ENCODE measurements at regions of chr5 and their contacts with region 1.

Region 1: GRCh38 chr5:129771058-129771838 is 23.4 kb downstream of the MINAR2 start:
- DNase-seq: peak; percentile 28
- CTCF ChIP-seq: peak; percentile 70

Region 2: DNA sequence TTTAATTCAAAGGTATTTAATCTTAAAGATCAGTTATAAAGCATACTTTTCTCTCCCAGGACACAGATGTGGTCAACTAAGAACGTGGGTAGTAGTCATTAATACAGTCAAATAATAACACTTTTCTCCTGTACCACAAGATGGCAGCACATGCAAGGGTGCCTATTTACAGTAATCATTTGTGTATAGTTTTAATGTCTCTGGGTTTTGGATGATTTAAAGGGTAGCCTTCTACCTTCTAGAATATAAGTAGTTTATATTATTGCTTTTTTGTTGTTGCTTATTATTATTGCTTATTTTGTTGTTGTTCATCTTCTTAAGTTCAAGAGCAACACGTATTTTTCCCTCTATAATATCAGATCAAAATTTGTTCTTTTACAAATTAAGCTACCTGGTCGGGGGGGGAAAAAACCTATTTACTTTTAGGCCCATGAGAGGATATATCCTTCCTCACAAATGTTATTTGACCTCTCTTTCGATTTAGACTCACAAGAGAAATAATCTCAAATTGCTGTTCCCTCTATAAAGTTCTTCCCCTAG is 865.6 kb before region 1 on chr5:
- CTCF ChIA-PET with region 1: interaction called, 13 read pairs
- POLR2A ChIA-PET with region 1: no interaction called
- DNase-seq: peak; percentile 33
- CTCF ChIP-seq: peak; percentile 75

Region 3: GRCh38 chr5:129664337-129664937 is 106.8 kb before region 1 on chr5:
- CTCF ChIA-PET with region 1: interaction called, 10 read pairs
- POLR2A ChIA-PET with region 1: no interaction called
- DNase-seq: peak; percentile 18
- CTCF ChIP-seq: peak; percentile 67

Region 4: GRCh38 chr5:129760636-129761505 is 10.4 kb before region 1 on chr5:
- CTCF ChIA-PET with region 1: interaction called, 20 read pairs
- POLR2A ChIA-PET with region 1: no interaction called
- DNase-seq: no peak
- CTCF ChIP-seq: no peak

Region 5: GRCh38 chr5:129781594-129781993 is 10.3 kb after region 1 on chr5:
- CTCF ChIA-PET with region 1: interaction called, 10 read pairs
- POLR2A ChIA-PET with region 1: no interaction called
- DNase-seq: no peak
- CTCF ChIP-seq: no peak

Region 6: GRCh38 chr5:129844764-129845163 is 73.5 kb after region 1 on chr5:
- CTCF ChIA-PET with region 1: interaction called, 118 read pairs
- POLR2A ChIA-PET with region 1: no interaction called
- DNase-seq: no peak
- CTCF ChIP-seq: no peak

Region 7: DNA sequence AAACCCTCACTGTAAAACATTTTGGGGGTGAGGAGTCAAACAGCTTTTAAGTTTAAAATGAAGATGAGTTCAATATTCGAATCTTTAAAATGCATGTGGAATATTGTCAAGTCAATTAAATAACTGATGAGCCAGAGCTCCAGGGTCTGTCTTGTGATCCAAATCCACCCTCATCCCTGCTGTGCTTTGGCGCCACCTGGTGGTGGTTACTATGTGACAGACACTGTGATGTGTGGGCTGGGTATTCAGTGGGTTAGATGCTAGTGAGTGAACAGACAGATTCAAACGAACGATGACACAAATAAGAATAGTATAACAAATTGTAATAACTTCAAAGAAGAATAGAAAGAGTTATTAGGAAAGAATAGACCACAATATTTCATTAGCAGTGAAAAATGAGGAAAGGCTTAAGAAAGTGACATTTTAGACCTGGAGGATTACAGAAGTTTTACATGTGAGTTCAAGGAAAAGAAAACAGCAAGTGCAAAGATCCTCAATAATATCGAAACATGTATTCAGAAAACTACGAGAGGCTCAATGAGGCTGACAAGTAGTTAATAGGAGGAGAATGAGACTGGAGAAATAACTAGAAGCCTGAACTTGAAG is 81.6 kb after region 1 on chr5:
- CTCF ChIA-PET with region 1: interaction called, 118 read pairs
- POLR2A ChIA-PET with region 1: no interaction called
- DNase-seq: peak; percentile 26
- CTCF ChIP-seq: peak; percentile 97

Region 8: GRCh38 chr5:130011986-130012385 is 240.7 kb after region 1 on chr5:
- CTCF ChIA-PET with region 1: no interaction called
- POLR2A ChIA-PET with region 1: no interaction called
- DNase-seq: no peak
- CTCF ChIP-seq: no peak

Measured in GM10248 (cell line).